CD4-positive, alpha-beta memory T cell (primary cell): ENCODE measurements at regions of chr2 and their contacts with region 1.

Region 1: GRCh38 chr2:226799181-226799975 is at the start of gene IRS1:
- DNase-seq: peak; percentile 46 to 66 (median 50)
- H3K4me3 ChIP-seq: peak within 1 kb of the TSS; percentile 29 to 66
- H3K4me3 Mint-ChIP-seq: peak within 1 kb of the TSS; percentile 84 to 90 (median 88)
- H3K27ac ChIP-seq: peak within 1 kb of the TSS; percentile 1
- H3K27ac Mint-ChIP-seq: peak within 1 kb of the TSS in 4 of 7 donors; percentile 42 to 84 (median 62)
- H3K4me1 ChIP-seq: peaks cover 22% of the 10 kb centered on the region
- H3K4me1 Mint-ChIP-seq: peaks cover 18 to 35% (median 24%) of the 10 kb centered on the region in 4 donors
- H3K27me3 ChIP-seq: no peaks in the 10 kb centered on the region
- H3K27me3 Mint-ChIP-seq: peaks cover 4 to 11% of the 10 kb centered on the region in 2 donors
- total RNA-seq, gene IRS1: 2.2 to 2.4 TPM

Region 2: GRCh38 chr2:225282858-225283710 is 1516.3 kb before region 1 on chr2:
- CTCF ChIA-PET with region 1: interaction called, 8 read pairs
- POLR2A ChIA-PET with region 1: no interaction called
- intact Hi-C with region 1: loop called (anchors 2 kb)
- DNase-seq: peak in 4 of 5 donors; percentile 13 to 37 (median 18)
- H3K4me3 ChIP-seq: no peak overlapping the region
- H3K4me3 Mint-ChIP-seq: no peak overlapping the region
- H3K27ac ChIP-seq: no peak overlapping the region
- H3K27ac Mint-ChIP-seq: no peak overlapping the region
- H3K4me1 ChIP-seq: no peaks in the 10 kb centered on the region
- H3K4me1 Mint-ChIP-seq: no peaks in the 10 kb centered on the region
- H3K27me3 ChIP-seq: no peaks in the 10 kb centered on the region
- H3K27me3 Mint-ChIP-seq: no peaks in the 10 kb centered on the region

Region 3: DNA sequence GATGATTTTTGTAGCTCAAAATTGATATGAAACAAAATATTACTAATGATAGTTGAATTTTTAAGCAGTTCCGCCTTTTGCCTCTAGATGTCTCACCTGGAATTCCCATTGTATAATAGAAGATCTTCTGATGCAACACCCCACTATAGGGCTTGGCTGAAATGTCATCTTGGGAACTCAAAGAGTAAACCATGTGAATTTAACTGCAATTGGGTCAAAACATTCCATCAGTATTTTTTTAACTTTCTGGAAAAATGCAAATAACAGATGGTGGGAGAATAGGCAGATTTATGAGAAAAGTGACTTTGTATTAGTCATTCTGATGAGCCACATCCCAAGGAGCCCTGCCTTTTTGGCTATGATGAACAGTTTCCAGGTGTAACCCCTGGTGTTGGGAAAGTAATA is 909.9 kb before region 1 on chr2:
- CTCF ChIA-PET with region 1: interaction called, 59 read pairs
- POLR2A ChIA-PET with region 1: no interaction called
- intact Hi-C with region 1: no loop called
- DNase-seq: peak in 4 of 5 donors; percentile 6 to 21 (median 8)
- H3K4me3 ChIP-seq: no peak overlapping the region
- H3K4me3 Mint-ChIP-seq: no peak overlapping the region
- H3K27ac ChIP-seq: no peak overlapping the region
- H3K27ac Mint-ChIP-seq: no peak overlapping the region
- H3K4me1 ChIP-seq: no peaks in the 10 kb centered on the region
- H3K4me1 Mint-ChIP-seq: no peaks in the 10 kb centered on the region
- H3K27me3 ChIP-seq: no peaks in the 10 kb centered on the region
- H3K27me3 Mint-ChIP-seq: peaks cover 2 to 6% of the 10 kb centered on the region in 2 donors

Region 4: DNA sequence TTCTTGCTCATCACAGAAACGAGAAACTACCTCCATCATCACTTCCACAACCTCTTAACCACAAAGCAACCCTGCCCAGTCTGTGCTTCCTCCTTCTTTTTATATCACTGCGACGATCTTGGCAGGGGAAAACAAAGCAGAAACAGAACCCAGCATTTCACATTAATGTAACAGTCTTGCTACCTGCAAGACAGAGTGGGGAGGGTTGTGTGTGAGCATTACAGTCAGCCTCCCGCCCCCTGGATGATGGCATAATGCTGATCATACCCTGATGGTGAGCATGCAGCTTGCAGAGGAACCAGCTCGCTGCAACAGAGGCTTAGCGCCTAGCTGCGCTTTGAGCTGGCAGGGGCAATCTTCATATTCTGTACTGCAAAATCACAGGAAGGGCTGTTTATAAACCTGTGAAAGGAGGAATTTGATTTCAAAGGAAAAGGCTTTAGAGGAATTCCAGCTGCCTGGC is 375.8 kb before region 1 on chr2:
- CTCF ChIA-PET with region 1: no interaction called
- POLR2A ChIA-PET with region 1: no interaction called
- intact Hi-C with region 1: loop called (anchors 5 kb)
- DNase-seq: peak; percentile 58 to 73 (median 65)
- H3K4me3 ChIP-seq: peak overlapping the region in 1 of 2 donors; percentile 29
- H3K4me3 Mint-ChIP-seq: peak overlapping the region; percentile 57 to 89 (median 75)
- H3K27ac ChIP-seq: no peak overlapping the region
- H3K27ac Mint-ChIP-seq: peak overlapping the region; percentile 5 to 79 (median 39)
- H3K4me1 ChIP-seq: peaks cover 26% of the 10 kb centered on the region
- H3K4me1 Mint-ChIP-seq: peaks cover 16 to 29% (median 22%) of the 10 kb centered on the region in 4 donors
- H3K27me3 ChIP-seq: no peaks in the 10 kb centered on the region
- H3K27me3 Mint-ChIP-seq: no peaks in the 10 kb centered on the region

Region 5: DNA sequence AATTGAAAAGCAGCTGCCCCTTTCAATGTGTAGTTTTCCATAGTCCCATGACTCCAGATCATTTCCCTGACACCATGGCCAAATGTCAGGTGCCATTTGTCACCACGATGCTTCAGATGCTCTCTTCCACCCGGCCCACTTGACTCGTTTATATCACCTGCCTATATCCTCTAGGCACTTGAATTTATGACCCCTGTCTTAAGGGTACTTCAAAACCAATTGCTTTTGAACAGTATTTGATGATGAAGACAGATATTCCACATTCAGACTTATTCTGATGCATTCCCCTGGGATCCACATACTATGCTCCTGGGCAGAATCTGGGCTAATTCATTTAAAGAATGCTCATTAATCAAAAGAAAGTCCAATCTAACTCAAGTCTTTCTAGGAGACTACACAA is 19.6 kb after region 1 on chr2:
- CTCF ChIA-PET with region 1: interaction called, 12 read pairs
- POLR2A ChIA-PET with region 1: no interaction called
- intact Hi-C with region 1: no loop called
- DNase-seq: no peak
- H3K4me3 ChIP-seq: no peak overlapping the region
- H3K4me3 Mint-ChIP-seq: no peak overlapping the region
- H3K27ac ChIP-seq: no peak overlapping the region
- H3K27ac Mint-ChIP-seq: no peak overlapping the region
- H3K4me1 ChIP-seq: no peaks in the 10 kb centered on the region
- H3K4me1 Mint-ChIP-seq: no peaks in the 10 kb centered on the region
- H3K27me3 ChIP-seq: no peaks in the 10 kb centered on the region
- H3K27me3 Mint-ChIP-seq: peaks cover 8 to 9% of the 10 kb centered on the region in 2 donors

Region 6: GRCh38 chr2:226984750-226985582 is 185.6 kb after region 1 on chr2:
- CTCF ChIA-PET with region 1: interaction called, 4 read pairs
- POLR2A ChIA-PET with region 1: no interaction called
- intact Hi-C with region 1: loop called (anchors 10 kb)
- DNase-seq: peak in 4 of 5 donors; percentile 3 to 23 (median 14)
- H3K4me3 ChIP-seq: no peak overlapping the region
- H3K4me3 Mint-ChIP-seq: no peak overlapping the region
- H3K27ac ChIP-seq: no peak overlapping the region
- H3K27ac Mint-ChIP-seq: peak overlapping the region in 2 of 7 donors; percentile 48 to 64
- H3K4me1 ChIP-seq: peaks cover 7% of the 10 kb centered on the region
- H3K4me1 Mint-ChIP-seq: peaks cover 14 to 23% (median 18%) of the 10 kb centered on the region in 4 donors
- H3K27me3 ChIP-seq: no peaks in the 10 kb centered on the region
- H3K27me3 Mint-ChIP-seq: no peaks in the 10 kb centered on the region